Heart left ventricle (tissue), 16 donors: ENCODE measurements at regions of chr1 and their contacts with region 1.

Region 1: DNA sequence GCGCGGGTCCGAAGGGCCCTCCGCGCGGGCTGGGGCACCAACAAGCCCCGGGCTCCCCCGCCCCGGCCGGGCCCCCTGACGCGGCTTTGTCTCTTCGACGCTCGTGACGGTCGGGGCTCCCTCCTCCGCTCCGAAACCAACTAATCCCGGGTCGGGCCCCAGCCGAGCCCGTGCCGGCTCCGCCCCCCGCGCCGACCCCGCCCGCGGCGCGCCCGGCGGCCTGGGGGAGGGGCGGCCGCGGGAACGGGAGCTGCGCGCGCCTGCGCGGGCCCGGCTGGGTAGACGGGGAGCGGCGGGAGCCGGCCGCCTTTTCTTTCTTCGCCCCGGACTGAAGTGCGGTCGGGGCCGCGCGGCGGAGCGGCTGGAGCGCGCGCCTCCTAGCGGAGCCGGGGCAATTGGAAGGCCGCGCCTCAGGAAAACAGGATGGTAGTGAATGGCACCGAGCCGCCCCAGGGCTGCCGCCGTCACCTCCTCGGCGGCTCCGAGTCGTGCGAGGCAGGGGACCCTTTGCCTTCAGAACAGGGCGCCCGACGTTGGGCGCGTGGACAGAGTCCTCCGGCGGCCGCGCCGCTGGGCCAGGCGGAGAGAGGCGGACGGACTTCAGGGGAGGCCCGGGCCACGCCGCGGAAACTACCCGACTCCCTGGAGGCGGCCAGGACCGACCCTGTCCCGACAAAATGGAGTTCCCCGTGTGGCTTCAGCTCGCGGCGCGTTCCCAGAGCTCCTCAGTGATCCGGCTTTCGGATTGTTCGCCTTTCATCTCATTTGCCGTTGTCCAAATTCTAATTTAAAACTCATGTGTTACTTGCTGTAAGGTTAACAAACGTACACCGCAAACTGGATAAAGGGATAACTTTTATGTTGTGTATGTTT is at the start of gene TP53BP2:
- DNase-seq: peak; percentile 90 to 96 (median 92)
- ATAC-seq: peak; percentile 88 to 97 (median 94)
- H3K4me3 ChIP-seq: peak within 1 kb of the TSS; percentile 75 to 95 (median 90)
- H3K27ac ChIP-seq: peak within 1 kb of the TSS; percentile 96 to 100 (median 99)
- H3K4me1 ChIP-seq: peaks cover 0 to 46% (median 33%) of the 10 kb centered on the region in 12 donors
- H3K27me3 ChIP-seq: no peaks in the 10 kb centered on the region
- CTCF ChIP-seq: peak; percentile 49 to 92 (median 72)
- POLR2A ChIP-seq: peak; percentile 43 to 80
- total RNA-seq, gene TP53BP2: 14.9 to 44.8 (median 23.4) TPM

Region 2: DNA sequence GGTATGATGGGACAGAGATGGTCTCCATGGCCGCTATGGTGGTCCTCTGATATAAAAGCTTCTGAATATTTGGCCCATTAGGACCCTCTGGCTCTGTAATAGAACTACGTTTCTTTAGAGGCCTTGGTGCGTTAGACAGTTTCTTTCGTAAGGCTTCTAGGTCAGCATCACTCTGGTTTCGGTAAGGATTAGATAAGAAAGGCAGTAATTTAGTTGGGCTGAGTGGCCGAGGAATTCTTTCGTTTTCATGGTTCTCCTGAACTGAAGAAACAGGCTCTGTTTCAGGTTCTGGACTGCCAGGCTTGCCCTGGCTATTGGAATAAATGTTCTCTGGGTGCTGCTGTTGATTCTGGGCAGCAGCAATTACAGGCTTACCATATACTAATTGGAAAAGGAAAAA is 49.8 kb before region 1 on chr1:
- intact Hi-C with region 1: no loop called
- DNase-seq: no peak
- ATAC-seq: no peak
- H3K4me3 ChIP-seq: no peak overlapping the region
- H3K27ac ChIP-seq: no peak overlapping the region
- H3K4me1 ChIP-seq: no peaks in the 10 kb centered on the region
- H3K27me3 ChIP-seq: no peaks in the 10 kb centered on the region
- CTCF ChIP-seq: no peak
- POLR2A ChIP-seq: no peak

Region 3: DNA sequence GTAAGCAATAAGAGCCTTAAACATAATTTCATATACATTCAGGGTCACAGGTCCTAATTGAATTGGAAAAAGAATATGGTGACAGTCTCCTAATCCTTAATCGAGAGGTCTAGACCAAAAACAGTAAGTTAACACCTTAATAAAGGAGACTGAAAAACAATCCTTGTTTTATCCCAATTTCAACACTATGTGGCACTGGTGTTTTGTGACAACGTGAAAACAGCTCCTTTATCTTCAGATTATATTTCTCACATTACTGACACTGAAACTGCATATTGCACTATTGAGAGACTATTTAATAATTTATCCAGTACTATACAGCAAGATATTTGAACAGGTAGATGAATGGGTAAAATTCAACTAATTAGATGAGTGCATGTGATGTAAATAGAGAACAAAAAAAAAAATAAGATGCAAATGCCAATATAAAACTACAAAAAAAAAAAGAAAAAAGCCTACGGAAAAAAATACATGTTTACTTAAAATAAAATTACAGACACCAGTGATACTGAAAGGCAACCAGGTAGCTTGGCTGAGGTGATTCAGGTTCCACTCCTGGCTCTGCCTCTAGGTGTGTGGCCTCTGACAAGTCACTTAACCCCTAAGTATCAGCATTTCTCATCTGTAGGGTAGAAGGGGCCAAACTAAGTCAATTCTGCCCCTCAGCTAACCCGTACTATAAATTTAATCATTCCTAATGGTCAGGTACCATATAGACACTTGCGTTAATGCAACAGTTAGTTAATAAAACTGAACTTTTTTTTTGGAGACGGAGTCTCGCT is 34.2 kb before region 1 on chr1:
- intact Hi-C with region 1: loop called in 3 of 10 experiments (anchors 2 to 5 kb)
- DNase-seq: no peak
- ATAC-seq: peak in 2 of 4 donors; percentile 57 to 63
- H3K4me3 ChIP-seq: no peak overlapping the region
- H3K27ac ChIP-seq: no peak overlapping the region
- H3K4me1 ChIP-seq: peaks cover 0 to 18% (median 10%) of the 10 kb centered on the region in 12 donors
- H3K27me3 ChIP-seq: no peaks in the 10 kb centered on the region
- CTCF ChIP-seq: peak; percentile 37 to 73 (median 62)
- POLR2A ChIP-seq: no peak

Region 4: DNA sequence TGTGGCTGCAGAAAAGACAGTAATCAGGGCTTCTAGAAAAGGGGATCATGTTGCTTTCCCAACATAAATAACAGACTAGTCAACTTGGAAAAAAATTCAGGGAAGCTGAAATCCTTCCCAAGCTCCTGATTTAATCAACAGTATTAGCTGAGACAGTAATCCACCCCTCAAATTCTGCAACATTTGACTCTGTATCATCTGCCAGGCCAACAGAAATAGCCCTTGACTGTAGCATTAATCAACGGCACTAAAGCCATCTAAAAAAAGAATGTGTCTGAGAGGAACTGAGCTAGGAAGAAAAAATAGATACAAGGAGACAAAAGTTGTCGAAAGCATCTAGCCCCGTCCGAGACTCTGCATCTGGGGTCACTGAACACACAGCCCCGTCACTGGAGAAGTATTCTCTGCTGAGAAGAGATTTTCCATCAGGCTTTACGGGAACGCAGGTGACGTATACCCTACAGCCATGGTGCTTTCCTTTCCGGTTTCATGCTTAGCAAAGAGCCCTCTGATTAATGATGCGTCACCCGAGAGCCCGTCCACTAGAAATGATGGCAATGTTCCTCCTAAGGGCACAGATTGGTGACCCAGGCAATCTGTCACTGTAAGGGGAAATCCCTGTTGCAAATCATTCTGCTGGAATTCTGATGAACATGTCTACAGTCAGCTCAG is 41.8 kb after region 1 on chr1:
- intact Hi-C with region 1: loop called in 1 of 10 experiments (anchors 5 kb)
- DNase-seq: peak in 3 of 5 donors; percentile 32 to 65 (median 34)
- ATAC-seq: peak; percentile 69 to 98 (median 96)
- H3K4me3 ChIP-seq: peak overlapping the region in 9 of 12 donors; percentile 13 to 44 (median 29)
- H3K27ac ChIP-seq: peak overlapping the region; percentile 40 to 90 (median 64)
- H3K4me1 ChIP-seq: peaks cover 0 to 8% (median 0%) of the 10 kb centered on the region in 12 donors
- H3K27me3 ChIP-seq: no peaks in the 10 kb centered on the region
- CTCF ChIP-seq: no peak
- POLR2A ChIP-seq: no peak

Region 5: GRCh38 chr1:224192082-224192788 is 346.2 kb after region 1 on chr1:
- intact Hi-C with region 1: no loop called
- DNase-seq: no peak
- ATAC-seq: no peak
- H3K4me3 ChIP-seq: no peak overlapping the region
- H3K27ac ChIP-seq: no peak overlapping the region
- H3K4me1 ChIP-seq: peaks cover 0 to 26% (median 0%) of the 10 kb centered on the region in 12 donors
- H3K27me3 ChIP-seq: no peaks in the 10 kb centered on the region
- CTCF ChIP-seq: no peak
- POLR2A ChIP-seq: no peak